Posterior vena cava (tissue), 2 donors: ENCODE measurements at regions of chr4 and their contacts with region 1.

Region 1: GRCh38 chr4:140359562-140360427 is 13.7 kb upstream of the SCOC start:
- DNase-seq: peak; percentile 86

Region 2: GRCh38 chr4:139651282-139652194 is 708.3 kb before region 1 on chr4:
- intact Hi-C with region 1: loop called in 1 of 2 experiments (anchors 10 kb)
- DNase-seq: peak; percentile 95

Region 3: DNA sequence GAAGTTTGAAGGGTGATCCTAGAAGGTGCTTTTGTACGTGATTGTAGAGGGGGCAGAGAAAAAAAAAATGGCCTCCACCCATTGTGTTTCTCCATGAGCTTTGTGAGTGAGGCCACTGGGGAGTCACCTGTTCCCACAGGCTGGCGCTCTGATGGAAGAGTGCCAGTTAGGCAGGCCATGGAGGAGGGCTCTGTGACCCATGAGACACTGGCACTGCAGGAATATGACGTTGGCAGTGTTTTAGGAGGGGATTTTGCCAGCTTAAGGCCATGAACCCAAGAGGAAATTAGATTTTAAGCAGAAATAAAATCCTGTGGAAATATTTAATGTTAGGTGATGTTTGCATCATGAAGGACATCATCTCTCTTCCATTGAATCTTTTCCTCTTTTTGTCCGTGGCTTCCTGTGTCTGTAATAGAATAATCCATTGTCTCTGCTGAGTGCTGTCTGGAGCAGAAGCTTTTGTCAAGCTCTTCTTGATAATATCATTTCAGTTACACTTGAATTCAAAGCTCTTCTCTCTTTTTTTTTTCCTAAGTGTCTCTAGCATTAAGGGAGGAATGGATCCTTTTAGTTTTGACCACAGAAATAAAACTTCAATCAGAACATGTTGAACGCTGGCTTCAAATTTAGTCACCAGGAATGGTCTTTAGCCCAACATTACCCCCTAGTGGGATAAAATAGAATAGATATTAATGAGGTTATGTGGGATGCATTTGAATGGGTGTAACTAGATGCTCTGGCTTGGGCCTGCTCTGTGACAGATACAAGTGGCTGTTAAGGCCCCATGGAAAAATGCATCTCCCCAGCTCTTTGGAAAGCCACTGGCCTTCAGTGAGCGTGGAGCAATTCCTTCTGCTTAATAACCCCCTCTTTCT is 250.0 kb after region 1 on chr4:
- intact Hi-C with region 1: loop called in 1 of 2 experiments (anchors 10 kb)
- DNase-seq: no peak

Region 4: GRCh38 chr4:140851032-140851636 is 491.3 kb after region 1 on chr4:
- intact Hi-C with region 1: loop called in 1 of 2 experiments (anchors 10 kb)
- DNase-seq: no peak